ENCODE measurements at regions of chr2 and their contacts with region 1.

Region 1: DNA sequence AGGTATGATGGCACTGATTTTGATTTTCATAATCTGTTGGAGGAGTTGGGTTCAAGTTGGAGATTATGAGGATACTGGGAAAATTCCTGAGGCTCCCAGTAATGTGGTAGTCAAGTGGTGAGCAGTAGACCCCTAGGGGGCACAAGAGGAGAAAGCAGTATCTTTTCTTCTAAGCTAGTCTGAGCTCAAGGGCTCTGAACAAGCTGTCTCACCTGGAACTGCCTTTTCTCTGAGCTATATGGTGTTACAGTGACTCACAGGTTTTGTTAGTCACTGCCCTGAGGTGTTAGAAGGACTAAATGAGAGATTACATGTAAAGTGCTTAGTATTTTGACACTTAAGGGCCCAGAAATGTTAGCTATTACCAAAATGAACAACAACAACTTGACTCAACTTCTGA is 42.2 kb downstream of the CD302 start:
- DNase-seq: peak; percentile 51
- ATAC-seq: peak; percentile 94
- H3K4me3 ChIP-seq: no peak overlapping the region
- H3K27ac ChIP-seq: no peak overlapping the region
- H3K4me1 ChIP-seq: no peaks in the 10 kb centered on the region
- H3K27me3 ChIP-seq: no peaks in the 10 kb centered on the region
- CTCF ChIP-seq: peak; percentile 63
- EP300 ChIP-seq: no peak
- POLR2A ChIP-seq: no peak
- RAD21 ChIP-seq: peak; percentile 50

Region 2: GRCh38 chr2:159921752-159922404 is 166.1 kb after region 1 on chr2:
- CTCF ChIA-PET with region 1: interaction called, 4 read pairs
- POLR2A ChIA-PET with region 1: no interaction called
- in situ Hi-C with region 1: no loop called
- intact Hi-C with region 1: loop called (anchors 1 kb)
- DNase-seq: peak; percentile 61
- ATAC-seq: peak; percentile 99
- H3K4me3 ChIP-seq: no peak overlapping the region
- H3K27ac ChIP-seq: no peak overlapping the region
- H3K4me1 ChIP-seq: peaks cover 15% of the 10 kb centered on the region
- H3K27me3 ChIP-seq: peaks cover 4% of the 10 kb centered on the region in 2 experiments; a peak in 4 of 5 replicates
- CTCF ChIP-seq: peak; percentile 98
- EP300 ChIP-seq: no peak
- POLR2A ChIP-seq: no peak
- RAD21 ChIP-seq: peak; percentile 90

Region 3: GRCh38 chr2:159939946-159940345 is 184.2 kb after region 1 on chr2:
- CTCF ChIA-PET with region 1: no interaction called
- POLR2A ChIA-PET with region 1: no interaction called
- in situ Hi-C with region 1: no loop called
- intact Hi-C with region 1: loop called (anchors 5 kb)
- DNase-seq: peak; percentile 25
- ATAC-seq: peak; percentile 68
- H3K4me3 ChIP-seq: no peak overlapping the region
- H3K27ac ChIP-seq: no peak overlapping the region
- H3K4me1 ChIP-seq: no peaks in the 10 kb centered on the region
- H3K27me3 ChIP-seq: no peaks in the 10 kb centered on the region; a peak in 1 of 5 replicates
- CTCF ChIP-seq: peak; percentile 56
- EP300 ChIP-seq: no peak
- POLR2A ChIP-seq: no peak
- RAD21 ChIP-seq: no peak

Measured in HepG2 (cell line).